Right ventricle myocardium inferior (tissue), 1 donor: ENCODE measurements at regions of chr22 and their contacts with region 1.

Region 1: DNA sequence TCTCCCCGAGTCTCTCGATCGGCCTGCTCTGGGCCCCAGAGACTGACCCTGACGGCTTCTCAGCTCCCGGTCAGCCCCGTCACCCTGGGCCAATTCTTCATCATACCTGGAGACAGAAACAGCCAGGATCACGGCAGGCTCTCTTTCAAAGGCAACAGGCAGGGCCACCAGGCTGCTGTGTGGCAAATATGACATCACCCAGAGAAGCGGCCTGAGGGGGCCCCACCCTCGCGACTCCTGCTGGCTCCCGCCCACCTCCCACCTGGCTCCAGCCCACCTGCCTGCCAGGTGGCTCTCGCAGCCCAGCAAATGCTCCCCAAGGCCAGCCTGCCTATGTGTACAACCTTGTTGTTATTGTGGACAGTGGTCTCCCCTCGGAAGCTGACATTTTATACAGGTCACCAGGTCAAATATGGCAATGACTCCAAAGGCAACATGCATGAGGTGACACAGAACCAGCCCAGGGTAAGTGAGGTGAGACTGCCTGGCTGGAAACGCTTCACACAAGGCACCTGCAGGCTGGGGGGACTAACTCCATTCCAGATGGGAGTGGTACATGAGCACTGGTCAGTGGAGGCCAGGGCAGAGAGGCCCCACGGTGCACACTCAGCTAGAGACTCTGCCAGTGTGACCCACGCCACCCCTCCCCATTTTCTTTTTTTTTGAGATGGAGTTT is 25.0 kb upstream of the PACSIN2 start:
- DNase-seq: no peak
- ATAC-seq: no peak

Region 2: GRCh38 chr22:42990139-42990767 is 49.7 kb before region 1 on chr22:
- intact Hi-C with region 1: no loop called
- DNase-seq: no peak
- ATAC-seq: no peak

Region 3: GRCh38 chr22:43007519-43008102 is 32.3 kb before region 1 on chr22:
- intact Hi-C with region 1: no loop called
- DNase-seq: no peak
- ATAC-seq: peak; percentile 56

Region 4: DNA sequence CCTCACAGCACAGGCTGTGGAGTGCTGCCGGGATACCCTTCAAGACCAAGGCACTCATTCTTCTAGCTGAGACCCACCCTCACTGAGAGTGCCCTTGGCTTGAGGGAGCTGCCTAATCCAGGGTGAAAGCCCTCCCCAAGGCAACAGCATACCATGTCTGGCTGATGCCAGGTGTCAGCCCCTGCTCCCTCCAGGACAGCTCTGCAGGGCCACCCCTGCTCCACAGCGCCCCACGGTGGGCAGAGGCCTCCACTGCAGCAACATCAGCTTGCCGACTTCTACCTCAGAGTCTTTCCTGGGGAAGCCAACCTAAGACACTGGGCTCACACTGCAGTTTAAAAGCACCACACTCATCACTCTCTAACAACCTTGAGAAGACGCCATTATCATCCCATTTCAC is 20.2 kb after region 1 on chr22:
- intact Hi-C with region 1: loop called (anchors 1 kb)
- DNase-seq: no peak
- ATAC-seq: no peak